ENCODE measurements at regions of chr1 and their contacts with region 1.

Region 1: GRCh38 chr1:156500797-156501499 is 373 bp upstream of the MEF2D start:
- DNase-seq: peak; percentile 87 to 97 (median 94)
- H3K4me3 ChIP-seq: peak overlapping the region; percentile 75 to 100 (median 98)
- H3K27ac ChIP-seq: peak overlapping the region; percentile 97 to 100 (median 100)
- H3K27me3 ChIP-seq: no peaks in the 10 kb centered on the region
- CTCF ChIP-seq: peak in 54 of 56 donors; percentile 29 to 77 (median 58)

Region 2: DNA sequence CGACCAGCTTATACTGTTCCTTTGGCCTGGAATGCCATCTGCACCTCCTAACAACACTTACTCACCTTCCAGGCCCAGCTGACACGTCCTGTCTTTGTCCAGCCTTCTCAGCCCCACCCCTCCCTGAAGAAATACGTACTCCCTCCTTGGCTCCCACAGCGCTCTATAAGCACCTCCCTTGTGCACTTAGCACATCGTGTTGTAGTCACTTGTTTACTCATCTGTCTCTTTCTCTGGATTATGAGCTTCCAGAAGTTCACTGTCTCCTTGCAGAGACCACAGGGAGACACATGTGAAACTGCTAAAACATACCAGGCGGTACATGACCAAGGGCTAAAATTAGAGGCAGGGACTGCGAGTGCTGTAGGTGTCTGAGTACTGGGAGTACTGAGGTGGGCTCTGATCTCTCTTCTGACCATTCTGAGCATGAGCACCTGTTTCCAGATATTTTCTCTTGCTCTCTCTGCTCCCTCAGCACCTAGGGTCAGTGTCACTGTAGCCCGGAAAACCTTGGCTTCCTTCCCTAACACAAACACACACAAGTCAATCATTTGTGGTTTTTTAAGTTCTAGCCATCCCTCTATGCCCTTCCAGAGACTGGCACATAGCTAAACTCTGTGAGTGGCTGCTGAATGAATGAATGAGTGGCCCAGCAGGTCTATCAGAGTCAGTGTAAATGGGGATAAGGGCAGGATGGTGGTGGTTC is 1462.2 kb before region 1 on chr1:
- intact Hi-C with region 1: no loop called
- DNase-seq: no peak
- H3K4me3 ChIP-seq: no peak overlapping the region
- H3K27ac ChIP-seq: no peak overlapping the region
- H3K27me3 ChIP-seq: no peaks in the 10 kb centered on the region
- CTCF ChIP-seq: no peak

Region 3: DNA sequence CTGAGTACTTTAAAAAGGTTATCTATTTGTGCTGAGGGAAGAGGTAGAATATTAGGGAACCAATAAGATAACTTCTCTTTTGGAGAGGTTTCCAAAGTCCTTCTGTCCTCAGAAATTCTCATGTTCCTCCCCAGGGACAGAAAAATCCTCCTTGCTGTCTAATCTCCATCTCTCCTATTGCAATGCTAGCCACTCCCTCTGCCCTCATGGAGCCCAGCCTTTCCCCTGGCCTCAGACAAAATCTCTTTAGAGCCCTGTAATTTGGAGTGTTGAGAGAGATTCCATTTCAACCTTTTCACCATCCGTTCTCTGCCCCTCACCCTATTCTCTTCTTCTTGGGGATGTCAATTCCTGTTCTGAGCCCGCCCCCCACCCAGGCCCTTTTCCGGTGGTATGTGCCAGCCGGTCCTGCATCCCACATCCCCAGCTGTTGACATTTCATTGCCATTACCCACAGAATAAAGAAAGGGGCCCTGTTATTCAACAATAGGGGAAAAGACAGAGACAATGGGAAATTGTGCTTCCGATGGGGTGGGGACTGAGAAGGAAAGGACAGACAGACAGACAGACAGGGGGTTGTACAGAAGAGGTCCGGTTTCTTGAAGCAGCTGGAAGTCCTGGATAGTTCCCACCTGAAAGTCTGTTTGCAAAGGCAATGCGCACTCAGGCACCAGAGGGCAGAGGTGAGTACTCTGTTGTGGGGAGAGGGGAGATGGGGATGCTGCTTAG is 118.1 kb after region 1 on chr1 and contains the start of gene HAPLN2:
- intact Hi-C with region 1: loop called in 1 of 2 experiments (anchors 5 kb)
- DNase-seq: peak in 2 of 10 donors; percentile 41 to 59
- H3K4me3 ChIP-seq: peak within 1 kb of the TSS; percentile 13 to 74 (median 52)
- H3K27ac ChIP-seq: peak within 1 kb of the TSS; percentile 12 to 100 (median 98)
- H3K27me3 ChIP-seq: peaks cover 0 to 7% (median 0%) of the 10 kb centered on the region in 45 donors
- CTCF ChIP-seq: peak in 46 of 56 donors; percentile 10 to 63 (median 40)
- total RNA-seq, gene HAPLN2: 30.2 to 650 (median 143) TPM